Calu3 (cell line): ENCODE measurements at regions of chr1 and their contacts with region 1.

Region 1: DNA sequence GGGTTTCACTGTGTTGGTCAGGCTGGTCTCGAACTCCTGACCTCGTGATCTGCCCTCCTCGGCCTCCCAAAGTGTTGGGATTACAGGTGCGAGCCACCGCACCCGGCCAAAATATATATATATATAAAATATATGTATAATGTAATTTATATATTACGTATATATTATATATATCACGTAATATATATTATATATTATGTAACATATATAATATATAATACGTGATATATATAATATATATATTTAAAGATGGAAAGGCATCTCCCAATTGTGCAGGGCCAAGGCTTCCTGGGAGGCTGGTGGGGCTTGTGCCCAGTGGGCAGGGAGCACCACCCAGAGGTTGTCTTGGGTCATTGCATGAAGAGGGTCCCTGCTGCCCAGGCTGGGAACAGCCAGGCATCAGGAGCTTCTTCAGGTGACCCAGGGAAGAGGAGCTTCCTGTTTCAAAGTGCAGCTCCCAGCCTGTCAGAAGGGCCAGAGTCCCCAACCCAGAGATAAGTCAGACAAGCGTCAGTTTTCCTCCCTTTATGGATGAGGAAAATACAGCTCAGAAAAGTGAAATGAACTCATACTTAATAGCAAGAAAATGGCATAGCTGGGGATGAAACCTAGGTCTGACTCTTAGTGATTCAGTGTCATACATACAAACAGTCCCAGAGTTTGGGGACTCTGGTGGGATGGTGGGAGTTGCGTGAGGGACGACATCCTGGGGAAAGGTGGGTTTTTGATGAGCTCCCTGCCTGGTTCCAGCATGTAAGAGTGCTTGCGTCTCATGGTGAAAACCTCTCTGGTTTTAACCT is 12.0 kb downstream of the UBE2Q1 start:
- DNase-seq: peak; percentile 82
- H3K4me3 Mint-ChIP-seq: no peak overlapping the region
- H3K27ac Mint-ChIP-seq: no peak overlapping the region
- H3K4me1 Mint-ChIP-seq: peaks cover 14% of the 10 kb centered on the region
- H3K27me3 Mint-ChIP-seq: peaks cover 44% of the 10 kb centered on the region
- CTCF ChIP-seq: peak; percentile 76

Region 2: DNA sequence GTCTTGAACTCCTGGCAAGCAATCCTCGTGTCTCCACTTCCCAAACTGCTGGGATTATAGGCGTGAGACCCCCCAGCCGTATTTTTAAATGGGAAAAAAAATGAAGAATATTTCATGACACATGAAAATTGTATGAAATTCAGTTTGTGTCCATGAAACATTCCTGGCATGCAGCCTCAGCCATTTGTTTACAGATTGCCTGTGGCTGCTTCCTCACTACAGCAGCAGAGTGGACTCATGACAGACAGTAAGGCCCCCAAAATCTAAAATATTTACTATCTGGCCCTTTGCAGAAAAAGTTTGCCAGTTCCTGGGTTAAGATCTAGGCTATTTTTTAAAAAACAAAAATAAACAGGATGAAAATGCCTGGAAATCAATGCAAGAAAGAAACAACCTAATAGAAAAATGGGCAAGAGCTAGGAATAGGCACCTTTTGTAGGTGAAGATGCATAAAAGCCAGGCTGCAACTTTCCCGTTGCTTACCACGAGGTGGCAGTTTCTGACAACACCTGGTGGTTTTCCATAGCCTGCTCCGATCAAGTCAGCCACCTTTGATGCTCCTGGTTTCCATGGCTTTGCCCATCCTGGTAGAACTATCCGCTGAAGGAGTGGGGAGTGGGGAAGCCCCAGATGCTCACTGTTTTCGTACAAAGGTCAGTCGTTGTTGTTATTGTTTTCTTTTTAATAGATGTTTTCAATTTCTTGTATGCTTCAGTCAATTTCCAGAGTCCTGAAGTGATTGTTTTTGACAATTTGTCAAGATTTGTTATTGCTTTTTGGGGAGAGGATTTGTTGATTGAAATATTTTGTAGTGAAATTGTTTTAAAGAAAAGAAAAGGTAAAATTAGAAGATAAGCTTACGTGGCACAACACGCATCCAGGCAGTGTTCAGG is 12.3 kb before region 1 on chr1:
- CTCF ChIA-PET with region 1: interaction called, 18 read pairs
- intact Hi-C with region 1: no loop called
- DNase-seq: peak; percentile 66
- H3K4me3 Mint-ChIP-seq: no peak overlapping the region
- H3K27ac Mint-ChIP-seq: no peak overlapping the region
- H3K4me1 Mint-ChIP-seq: no peaks in the 10 kb centered on the region
- H3K27me3 Mint-ChIP-seq: peaks cover 64% of the 10 kb centered on the region
- CTCF ChIP-seq: peak; percentile 71